ENCODE measurements at regions of chr2 and their contacts with region 1.

Region 1: DNA sequence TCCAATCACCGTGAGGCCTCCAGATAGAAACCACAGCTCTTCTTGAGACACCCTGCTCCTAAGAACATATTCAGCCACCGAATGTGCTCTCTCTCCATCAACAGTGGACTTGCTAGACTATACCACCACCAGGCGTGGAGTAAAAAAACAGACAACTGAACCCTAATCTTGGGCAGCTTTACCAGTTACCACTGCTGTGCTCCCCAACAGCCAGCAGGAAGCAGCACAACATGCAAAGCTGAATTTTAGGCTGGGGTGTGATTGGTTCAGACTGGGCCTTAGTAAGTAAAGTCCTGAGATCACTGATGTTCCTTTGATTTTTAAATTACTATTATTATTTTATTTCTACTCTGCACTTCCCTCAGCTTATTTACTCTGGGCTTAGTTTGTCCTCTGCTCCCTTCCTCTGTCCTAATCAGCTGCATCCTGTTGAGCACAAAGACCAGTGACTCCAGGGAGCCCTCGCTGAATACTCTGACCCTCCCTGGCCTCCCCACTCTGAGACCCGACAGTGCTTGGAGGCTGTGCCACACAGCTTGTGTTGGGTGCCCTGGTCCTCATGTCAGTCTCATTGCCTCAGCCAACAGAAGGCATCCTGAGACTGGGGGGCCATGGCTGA is 21.9 kb downstream of the MRPL35 start:
- DNase-seq: peak; percentile 71
- H3K4me3 ChIP-seq: no peak overlapping the region
- H3K27ac ChIP-seq: no peak overlapping the region
- H3K4me1 ChIP-seq: peaks cover 6 to 27% of the 10 kb centered on the region in 2 experiments; a peak in 2 of 4 replicates
- H3K27me3 ChIP-seq: no peaks in the 10 kb centered on the region
- CTCF ChIP-seq: peak; percentile 97
- EP300 ChIP-seq: no peak
- RAD21 ChIP-seq: peak; percentile 88

Region 2: GRCh38 chr2:86201671-86202335 is 19.4 kb before region 1 on chr2:
- CTCF ChIA-PET with region 1: interaction called, 20 read pairs
- POLR2A ChIA-PET with region 1: interaction called, 3 read pairs
- DNase-seq: no peak
- H3K4me3 ChIP-seq: no peak overlapping the region
- H3K27ac ChIP-seq: no peak overlapping the region
- H3K4me1 ChIP-seq: peaks cover 0 to 3% of the 10 kb centered on the region in 2 experiments; a peak in 2 of 4 replicates
- H3K27me3 ChIP-seq: no peaks in the 10 kb centered on the region
- CTCF ChIP-seq: no peak
- EP300 ChIP-seq: no peak
- RAD21 ChIP-seq: no peak

Region 3: GRCh38 chr2:86249579-86250391 is 28.6 kb after region 1 on chr2:
- CTCF ChIA-PET with region 1: interaction called, 22 read pairs
- POLR2A ChIA-PET with region 1: interaction called, 4 read pairs
- DNase-seq: peak; percentile 76
- H3K4me3 ChIP-seq: peak overlapping the region in 1 of 2 experiments; percentile 1; a peak in 1 of 4 replicates
- H3K27ac ChIP-seq: peak overlapping the region; percentile 40 to 98; a peak in 3 of 4 replicates
- H3K4me1 ChIP-seq: peaks cover 0 to 34% of the 10 kb centered on the region in 2 experiments; a peak in 2 of 4 replicates
- H3K27me3 ChIP-seq: peaks cover 7% of the 10 kb centered on the region; the same call in 1 of the 2 replicates
- CTCF ChIP-seq: peak; percentile 14; the same call in 1 of the 2 replicates
- EP300 ChIP-seq: peak in 1 of 2 experiments; percentile 74; a peak in 1 of 4 replicates
- RAD21 ChIP-seq: peak; percentile 40; the same call in 1 of the 2 replicates

Region 4: DNA sequence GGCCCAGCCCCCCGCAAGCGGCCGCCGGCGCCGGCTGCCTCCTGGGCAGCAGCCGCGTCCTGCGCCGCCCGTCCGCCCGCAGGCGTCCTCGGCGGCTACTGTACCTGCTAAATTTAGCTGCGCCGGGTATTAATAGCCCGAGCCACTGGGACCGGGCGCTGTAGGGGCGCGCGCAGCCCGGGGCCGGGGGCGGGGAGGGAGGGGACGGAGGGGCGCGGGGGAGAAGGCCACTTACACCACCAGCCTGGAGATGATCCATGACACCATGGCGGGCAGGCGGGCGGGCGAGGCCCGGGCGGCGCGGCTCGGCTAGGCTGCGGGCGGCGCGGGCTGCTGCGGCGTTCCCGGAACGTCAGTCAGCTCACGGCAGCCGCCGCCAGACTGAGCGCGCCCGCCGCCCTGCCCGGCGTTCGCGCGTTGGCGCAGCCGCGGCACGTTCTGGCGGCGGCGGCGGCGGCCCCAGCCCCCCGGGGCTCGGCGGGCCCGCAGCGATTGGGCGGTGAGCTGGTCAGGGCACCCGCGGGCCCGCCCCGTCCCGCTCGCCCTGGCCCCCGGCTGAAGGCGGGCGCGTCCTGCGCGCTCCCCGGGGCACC is 116.2 kb after region 1 on chr2 and contains the start of gene REEP1:
- CTCF ChIA-PET with region 1: interaction called, 13 read pairs
- POLR2A ChIA-PET with region 1: no interaction called
- DNase-seq: peak; percentile 87
- H3K4me3 ChIP-seq: peak within 1 kb of the TSS; percentile 19 to 46; a peak in 3 of 4 replicates
- H3K27ac ChIP-seq: no peak within 1 kb of the TSS
- H3K4me1 ChIP-seq: peaks cover 0 to 13% of the 10 kb centered on the region in 2 experiments; a peak in 1 of 4 replicates
- H3K27me3 ChIP-seq: peaks cover 32% of the 10 kb centered on the region
- CTCF ChIP-seq: no peak
- EP300 ChIP-seq: no peak
- RAD21 ChIP-seq: no peak
- polyA plus RNA-seq, gene REEP1: 0.13 TPM in 2 replicates

Region 5: GRCh38 chr2:86383844-86384243 is 162.7 kb after region 1 on chr2:
- CTCF ChIA-PET with region 1: interaction called, 12 read pairs
- POLR2A ChIA-PET with region 1: no interaction called
- DNase-seq: no peak
- H3K4me3 ChIP-seq: no peak overlapping the region
- H3K27ac ChIP-seq: no peak overlapping the region
- H3K4me1 ChIP-seq: no peaks in the 10 kb centered on the region; a peak in 1 of 4 replicates
- H3K27me3 ChIP-seq: no peaks in the 10 kb centered on the region
- CTCF ChIP-seq: no peak
- EP300 ChIP-seq: no peak
- RAD21 ChIP-seq: no peak